Dendritic cell treated with granulocyte-macrophage colony-stimulating factor and Interleukin-4, amounts not matched to agents 40 ng/mL and 50 ng/mL, for 4 days (primary cell): ENCODE measurements at regions of chr22 and their contacts with region 1.

Region 1: DNA sequence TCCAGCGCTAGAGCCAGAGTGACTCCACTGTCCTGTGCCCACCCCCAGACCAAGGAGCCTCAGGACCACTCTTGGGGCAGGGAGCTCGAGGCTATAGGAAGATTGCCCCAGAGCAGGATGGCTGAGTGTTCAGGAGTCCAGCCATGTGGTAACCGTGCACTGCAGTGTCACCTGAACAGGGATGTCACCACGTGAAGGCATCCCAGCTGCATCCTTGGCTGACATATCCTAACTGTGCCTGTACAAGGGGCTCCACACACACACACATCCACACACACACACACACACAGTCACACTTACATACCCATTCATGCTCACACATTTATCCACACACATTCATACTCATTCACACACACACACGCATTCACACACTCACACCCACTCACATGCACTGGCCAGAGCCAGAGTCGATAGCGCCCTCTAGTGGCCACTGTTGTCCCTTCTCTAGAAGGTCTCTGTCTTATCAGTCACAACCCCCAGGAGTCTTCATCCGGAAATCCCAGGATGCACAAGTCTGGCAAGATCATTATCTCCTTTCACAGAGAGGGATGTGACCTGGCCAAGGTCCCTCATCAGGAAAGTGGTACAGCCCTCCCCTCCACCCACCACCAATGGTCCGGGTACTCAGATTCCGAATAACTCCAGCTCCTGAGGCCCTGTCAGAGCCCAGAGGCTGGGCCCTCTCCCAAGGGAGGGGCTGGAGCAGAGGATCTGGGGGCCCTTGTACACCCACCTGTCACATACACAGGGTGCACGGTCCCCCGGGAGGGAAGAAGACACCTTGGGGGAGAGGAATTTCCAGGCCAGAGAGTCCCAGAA is 55.1 kb downstream of the IGLL5 start:
- H3K4me3 Mint-ChIP-seq: no peak overlapping the region
- H3K27ac Mint-ChIP-seq: peak overlapping the region; percentile 13
- H3K4me1 Mint-ChIP-seq: peaks cover 90% of the 10 kb centered on the region
- H3K27me3 Mint-ChIP-seq: no peaks in the 10 kb centered on the region

Region 2: GRCh38 chr22:22913989-22914388 is 28.7 kb before region 1 on chr22:
- intact Hi-C with region 1: no loop called
- H3K4me3 Mint-ChIP-seq: no peak overlapping the region
- H3K27ac Mint-ChIP-seq: peak overlapping the region; percentile 21
- H3K4me1 Mint-ChIP-seq: peaks cover 21% of the 10 kb centered on the region
- H3K27me3 Mint-ChIP-seq: peaks cover 17% of the 10 kb centered on the region

Region 3: DNA sequence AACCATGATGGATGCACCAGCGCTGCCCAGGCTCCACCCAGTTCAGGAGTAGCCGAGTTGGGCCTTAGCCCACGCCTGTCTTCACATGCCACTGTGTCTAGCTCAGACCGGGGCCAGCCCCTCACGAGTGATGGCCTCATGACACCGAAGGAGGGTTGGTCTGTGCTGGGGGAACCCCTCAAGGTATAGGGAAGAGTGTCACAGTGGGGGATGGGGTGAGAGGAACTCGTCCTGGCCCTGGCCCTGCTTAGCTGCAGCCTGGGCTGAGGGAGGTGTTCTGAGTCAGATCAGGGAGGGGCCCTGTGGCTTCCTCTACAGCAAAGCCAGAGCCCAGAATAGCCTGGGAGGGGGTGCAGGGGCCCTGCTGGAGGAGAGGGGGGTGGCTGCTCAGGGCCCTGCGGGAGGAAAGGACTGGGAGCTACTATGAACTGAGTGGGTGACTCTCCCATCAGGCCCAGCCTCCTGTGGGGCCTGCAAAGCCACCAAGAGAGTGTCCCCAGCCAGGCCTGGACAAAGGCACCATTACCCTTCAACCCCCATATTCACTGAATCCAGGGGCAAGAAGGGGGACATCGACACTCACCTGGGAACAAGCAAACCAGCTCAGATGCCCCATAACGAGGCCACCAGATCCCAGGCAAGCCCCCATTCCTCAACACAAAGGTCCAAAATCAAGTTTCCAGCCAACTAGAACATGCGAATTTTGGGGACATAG is 13.9 kb before region 1 on chr22:
- intact Hi-C with region 1: loop called (anchors 1 kb)
- H3K4me3 Mint-ChIP-seq: peak overlapping the region; percentile 7
- H3K27ac Mint-ChIP-seq: peak overlapping the region; percentile 73
- H3K4me1 Mint-ChIP-seq: peaks cover 85% of the 10 kb centered on the region
- H3K27me3 Mint-ChIP-seq: peaks cover 10% of the 10 kb centered on the region

Region 4: GRCh38 chr22:22968366-22968765 is 25.6 kb after region 1 on chr22:
- intact Hi-C with region 1: no loop called
- H3K4me3 Mint-ChIP-seq: no peak overlapping the region
- H3K27ac Mint-ChIP-seq: no peak overlapping the region
- H3K4me1 Mint-ChIP-seq: no peaks in the 10 kb centered on the region
- H3K27me3 Mint-ChIP-seq: peaks cover 52% of the 10 kb centered on the region

Region 5: GRCh38 chr22:23402275-23403151 is 459.8 kb after region 1 on chr22:
- intact Hi-C with region 1: no loop called
- H3K4me3 Mint-ChIP-seq: no peak overlapping the region
- H3K27ac Mint-ChIP-seq: no peak overlapping the region
- H3K4me1 Mint-ChIP-seq: no peaks in the 10 kb centered on the region
- H3K27me3 Mint-ChIP-seq: peaks cover 13% of the 10 kb centered on the region